HepG2 (cell line): ENCODE measurements at regions of chr4 and their contacts with region 1.

Region 1: DNA sequence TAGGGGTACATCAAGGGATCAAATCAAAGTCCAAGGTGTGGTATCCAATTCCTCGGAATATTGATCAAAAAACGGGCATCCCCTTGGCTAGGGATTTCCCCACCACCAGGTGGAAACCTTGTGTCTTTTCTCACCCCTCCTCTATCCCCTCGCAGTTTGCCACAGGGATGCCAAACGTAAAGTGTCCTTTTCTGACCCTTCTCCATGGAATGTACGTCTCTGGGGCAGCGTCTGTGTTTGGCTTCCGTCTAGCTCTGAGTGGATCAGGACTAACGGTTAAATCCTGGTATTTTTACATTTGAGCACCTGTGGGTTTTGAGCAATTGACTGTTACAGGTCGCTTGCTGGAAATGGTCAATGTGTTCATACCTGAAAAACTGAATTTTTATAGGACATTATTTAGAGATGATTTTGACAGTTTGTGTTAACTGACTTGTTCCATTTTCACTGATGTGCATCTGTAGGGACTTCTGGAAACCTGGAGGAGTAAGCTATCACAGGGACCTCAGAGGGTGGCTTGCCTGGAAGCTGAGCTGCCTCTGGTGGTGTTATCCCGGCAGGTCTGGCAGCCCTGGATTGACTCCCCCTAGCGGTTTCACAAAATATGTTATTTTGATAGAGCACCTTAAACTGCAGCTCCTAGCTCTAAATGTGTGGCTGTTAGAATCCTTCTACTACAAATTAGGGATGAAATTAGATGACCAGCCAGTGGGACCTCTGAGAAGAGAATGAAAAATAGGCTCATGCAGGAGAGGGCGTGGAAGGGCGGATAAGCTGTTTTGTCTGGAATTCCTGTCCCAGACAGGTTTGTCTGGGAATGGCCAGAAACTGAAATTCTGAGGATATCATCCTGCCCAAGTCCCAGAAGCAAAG is 8.8 kb upstream of the MGST2 start:
- DNase-seq: peak; percentile 76
- ATAC-seq: peak; percentile 82
- H3K4me3 ChIP-seq: peak overlapping the region; percentile 4 to 58 (median 20); a peak in 2 of 6 replicates
- H3K27ac ChIP-seq: peak overlapping the region; percentile 81
- H3K4me1 ChIP-seq: peaks cover 73% of the 10 kb centered on the region
- H3K27me3 ChIP-seq: no peaks in the 10 kb centered on the region
- CTCF ChIP-seq: peak; percentile 79
- EP300 ChIP-seq: no peak
- POLR2A ChIP-seq: no peak
- RAD21 ChIP-seq: no peak; the same call in none of the 2 replicates

Region 2: DNA sequence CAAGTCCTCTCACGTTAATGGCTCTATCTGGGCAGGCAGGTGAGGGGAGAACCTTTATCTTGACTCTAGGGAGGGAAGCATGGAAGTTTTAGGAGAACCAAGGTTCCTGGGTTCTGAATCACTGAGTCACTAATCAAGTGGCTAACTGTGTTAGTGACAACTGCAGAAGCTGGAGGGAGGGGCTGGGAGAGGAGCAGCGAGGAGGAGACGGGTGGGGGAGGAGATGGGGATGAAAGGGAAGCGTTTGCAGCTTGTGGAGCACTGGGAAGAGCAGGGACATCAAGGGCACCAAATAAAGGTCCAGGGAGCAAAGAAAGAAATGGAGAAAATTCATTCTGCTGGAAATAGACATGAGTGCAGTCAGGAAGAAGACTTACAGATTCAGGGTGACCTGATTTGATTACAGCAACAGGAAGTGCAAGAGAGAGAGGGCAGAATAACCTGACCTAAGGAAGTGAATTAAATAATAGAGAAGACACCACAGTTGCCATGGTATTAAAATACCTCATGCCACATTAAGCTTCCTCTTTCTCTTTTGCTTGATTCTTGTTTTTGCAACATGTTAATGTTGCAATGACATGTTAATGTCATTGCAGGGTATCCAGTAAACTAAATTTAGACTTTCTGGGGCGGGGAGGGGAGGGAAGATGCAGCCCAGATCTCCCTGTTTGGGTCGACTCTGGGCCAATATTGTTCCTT is 96.3 kb before region 1 on chr4:
- CTCF ChIA-PET with region 1: no interaction called
- POLR2A ChIA-PET with region 1: no interaction called
- in situ Hi-C with region 1: no loop called
- intact Hi-C with region 1: no loop called
- DNase-seq: no peak
- ATAC-seq: no peak
- H3K4me3 ChIP-seq: no peak overlapping the region
- H3K27ac ChIP-seq: no peak overlapping the region
- H3K4me1 ChIP-seq: peaks cover 32% of the 10 kb centered on the region
- H3K27me3 ChIP-seq: peaks cover 6 to 51% of the 10 kb centered on the region in 2 experiments
- CTCF ChIP-seq: no peak
- EP300 ChIP-seq: no peak
- POLR2A ChIP-seq: no peak
- RAD21 ChIP-seq: no peak

Region 3: GRCh38 chr4:139692309-139693012 is 35.6 kb after region 1 on chr4:
- CTCF ChIA-PET with region 1: interaction called, 12 read pairs
- POLR2A ChIA-PET with region 1: interaction called, 10 read pairs
- in situ Hi-C with region 1: no loop called
- intact Hi-C with region 1: loop called (anchors 1 kb)
- DNase-seq: peak; percentile 94
- ATAC-seq: peak; percentile 85
- H3K4me3 ChIP-seq: peak overlapping the region in 1 of 3 experiments; percentile 55; a peak in 2 of 6 replicates
- H3K27ac ChIP-seq: peak overlapping the region; percentile 97
- H3K4me1 ChIP-seq: peaks cover 87% of the 10 kb centered on the region
- H3K27me3 ChIP-seq: no peaks in the 10 kb centered on the region
- CTCF ChIP-seq: peak; percentile 44
- EP300 ChIP-seq: peak; percentile 52 to 96; a peak in 2 of 4 replicates
- POLR2A ChIP-seq: peak in 1 of 2 experiments; percentile 13; a peak in 1 of 4 replicates
- RAD21 ChIP-seq: 0 out of 2 replicates have a peak, but pooled peaks have one; percentile 10

Region 4: GRCh38 chr4:139740531-139741041 is 83.7 kb after region 1 on chr4:
- CTCF ChIA-PET with region 1: interaction called, 7 read pairs
- POLR2A ChIA-PET with region 1: interaction called, 5 read pairs
- in situ Hi-C with region 1: loop called (anchors 5 kb)
- intact Hi-C with region 1: no loop called
- DNase-seq: peak; percentile 83
- ATAC-seq: peak; percentile 48
- H3K4me3 ChIP-seq: no peak overlapping the region
- H3K27ac ChIP-seq: peak overlapping the region; percentile 73
- H3K4me1 ChIP-seq: peaks cover 42% of the 10 kb centered on the region
- H3K27me3 ChIP-seq: no peaks in the 10 kb centered on the region
- CTCF ChIP-seq: peak; percentile 60
- EP300 ChIP-seq: no peak; a peak in 1 of 4 replicates
- POLR2A ChIP-seq: no peak
- RAD21 ChIP-seq: no peak

Region 5: GRCh38 chr4:139768896-139769295 is 112.0 kb after region 1 on chr4:
- CTCF ChIA-PET with region 1: interaction called, 21 read pairs
- POLR2A ChIA-PET with region 1: no interaction called
- in situ Hi-C with region 1: no loop called
- intact Hi-C with region 1: loop called (anchors 1 kb)
- DNase-seq: peak; percentile 36
- ATAC-seq: peak; percentile 85
- H3K4me3 ChIP-seq: no peak overlapping the region
- H3K27ac ChIP-seq: no peak overlapping the region
- H3K4me1 ChIP-seq: peaks cover 21% of the 10 kb centered on the region
- H3K27me3 ChIP-seq: peaks cover 0 to 4% of the 10 kb centered on the region in 2 experiments; a peak in 2 of 5 replicates
- CTCF ChIP-seq: peak; percentile 67
- EP300 ChIP-seq: no peak
- POLR2A ChIP-seq: no peak
- RAD21 ChIP-seq: no peak

Region 6: GRCh38 chr4:139901531-139902320 is 244.9 kb after region 1 on chr4:
- CTCF ChIA-PET with region 1: no interaction called
- POLR2A ChIA-PET with region 1: no interaction called
- in situ Hi-C with region 1: no loop called
- intact Hi-C with region 1: no loop called
- DNase-seq: no peak
- ATAC-seq: no peak
- H3K4me3 ChIP-seq: no peak overlapping the region
- H3K27ac ChIP-seq: no peak overlapping the region
- H3K4me1 ChIP-seq: no peaks in the 10 kb centered on the region
- H3K27me3 ChIP-seq: peaks cover 0 to 9% of the 10 kb centered on the region in 2 experiments; a peak in 1 of 5 replicates
- CTCF ChIP-seq: no peak
- EP300 ChIP-seq: no peak
- POLR2A ChIP-seq: no peak
- RAD21 ChIP-seq: no peak

Region 7: GRCh38 chr4:140326395-140326993 is 669.6 kb after region 1 on chr4:
- CTCF ChIA-PET with region 1: no interaction called
- POLR2A ChIA-PET with region 1: no interaction called
- in situ Hi-C with region 1: no loop called
- intact Hi-C with region 1: loop called (anchors 5 kb)
- DNase-seq: peak; percentile 15
- ATAC-seq: peak; percentile 92
- H3K4me3 ChIP-seq: no peak overlapping the region
- H3K27ac ChIP-seq: no peak overlapping the region
- H3K4me1 ChIP-seq: no peaks in the 10 kb centered on the region
- H3K27me3 ChIP-seq: no peaks in the 10 kb centered on the region
- CTCF ChIP-seq: peak; percentile 56
- EP300 ChIP-seq: no peak
- POLR2A ChIP-seq: no peak
- RAD21 ChIP-seq: no peak